ENCODE measurements at regions of chr3 and their contacts with region 1.

Region 1: DNA sequence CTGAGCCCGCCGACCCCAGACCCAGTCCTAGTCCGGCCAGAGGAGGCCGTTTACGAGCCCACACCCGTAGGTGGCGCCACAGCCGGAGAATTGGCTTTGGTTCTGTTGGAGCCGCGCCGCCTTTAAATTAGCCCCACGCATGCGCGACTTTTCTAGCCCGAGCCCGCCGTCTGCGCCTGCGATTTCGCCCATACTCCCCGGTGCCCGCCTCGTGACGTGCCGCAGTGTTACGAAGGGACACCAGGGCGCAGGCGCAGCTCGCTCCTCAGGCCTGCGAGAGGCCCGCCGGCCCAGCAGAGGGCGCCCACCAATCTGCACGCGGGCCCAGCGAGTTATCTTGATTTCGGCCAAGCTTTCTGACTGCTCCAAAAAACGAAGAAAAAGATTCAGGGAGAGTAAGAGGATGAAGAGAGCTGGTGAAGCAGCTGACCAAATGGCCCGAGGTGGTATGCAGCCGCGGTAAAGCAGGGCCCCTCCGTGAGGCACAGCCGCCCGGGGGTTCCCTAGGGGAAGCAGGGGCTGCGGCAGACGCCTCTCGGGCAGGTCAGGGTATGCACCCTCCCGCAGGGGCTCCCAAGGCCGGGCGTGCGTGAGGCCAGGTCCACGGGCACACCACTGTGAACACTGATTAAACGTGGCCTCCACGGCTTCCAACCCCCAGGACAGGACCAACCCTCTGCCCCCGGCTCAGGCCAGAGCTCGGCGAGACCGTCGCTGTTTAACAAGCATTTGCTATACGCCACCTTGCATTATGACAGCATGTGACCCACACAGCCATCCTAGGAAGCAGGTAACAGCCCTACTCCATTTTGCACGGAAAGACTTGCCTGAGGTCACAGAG is 32.8 kb downstream of the RPN1 start:
- DNase-seq: peak; percentile 94 to 99 (median 98)

Region 2: GRCh38 chr3:127775398-127776109 is 842.2 kb before region 1 on chr3:
- intact Hi-C with region 1: no loop called
- DNase-seq: peak in 2 of 10 donors; percentile 73 to 78

Region 3: DNA sequence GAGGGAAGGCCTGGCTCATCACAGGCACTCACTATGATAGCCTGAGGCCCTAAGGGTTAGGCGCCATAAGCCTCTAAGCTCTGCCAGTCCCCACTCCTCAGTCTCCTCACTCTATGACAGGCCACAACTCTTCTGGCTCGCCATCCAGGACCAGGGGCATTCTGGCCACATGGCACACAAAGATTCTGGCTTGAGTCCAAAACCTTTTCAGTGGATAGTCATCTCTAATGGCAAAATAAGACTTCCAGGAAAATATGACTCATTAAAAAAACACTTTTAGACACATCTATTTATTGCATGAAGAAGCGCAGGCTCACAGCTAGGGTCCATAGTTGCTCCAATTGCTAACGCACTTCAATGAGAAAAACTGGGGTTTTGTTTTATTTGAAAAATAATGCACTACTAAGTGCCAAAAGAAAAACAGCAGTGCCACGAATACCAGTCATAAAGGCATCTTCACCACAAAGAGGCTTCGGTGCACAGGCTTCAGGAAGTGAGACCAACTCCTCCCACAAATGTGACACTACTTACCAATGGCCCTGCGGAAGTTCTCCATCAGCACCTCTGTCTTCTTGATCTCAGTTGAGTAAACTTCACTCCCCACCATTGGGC is 505.3 kb before region 1 on chr3:
- intact Hi-C with region 1: no loop called
- DNase-seq: no peak

Region 4: DNA sequence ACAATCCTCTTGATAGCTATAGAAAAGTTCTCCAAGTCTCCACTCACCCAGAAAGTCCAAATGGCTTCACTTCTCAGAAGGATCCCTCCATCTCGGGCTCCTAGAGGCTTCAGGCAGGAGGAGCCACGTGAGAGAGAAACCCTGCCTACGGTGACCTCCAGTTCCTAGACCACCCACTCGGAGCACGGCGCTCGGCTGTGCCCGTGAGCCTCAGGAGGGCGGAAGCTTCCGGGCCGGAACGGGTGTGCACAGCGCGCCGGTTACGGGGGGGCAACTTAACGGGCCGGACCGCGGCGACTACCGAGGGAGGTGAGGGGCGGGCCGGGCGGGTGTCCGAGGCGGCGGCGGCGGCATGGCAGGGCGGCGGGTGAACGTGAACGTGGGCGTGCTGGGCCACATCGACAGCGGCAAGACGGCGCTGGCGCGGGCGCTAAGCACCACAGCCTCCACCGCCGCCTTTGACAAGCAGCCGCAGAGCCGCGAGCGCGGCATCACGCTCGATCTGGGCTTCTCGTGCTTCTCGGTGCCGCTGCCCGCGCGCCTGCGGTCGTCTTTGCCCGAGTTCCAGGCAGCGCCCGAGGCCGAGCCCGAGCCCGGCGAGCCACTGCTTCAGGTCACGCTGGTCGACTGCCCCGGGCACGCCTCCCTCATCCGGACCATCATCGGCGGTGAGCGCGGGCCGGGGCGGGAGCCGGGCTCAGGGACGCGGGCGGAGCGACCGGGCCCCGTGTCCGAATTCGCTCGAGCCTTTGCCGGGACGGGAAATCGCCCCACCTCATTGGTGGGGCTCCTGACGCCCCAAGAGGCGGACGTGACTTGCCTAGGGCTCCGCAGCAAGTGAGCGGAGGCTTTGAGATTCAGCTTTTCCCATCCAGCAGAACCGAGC is 464.4 kb before region 1 on chr3 and contains the start of gene EEFSEC:
- intact Hi-C with region 1: no loop called
- DNase-seq: peak; percentile 64 to 97 (median 82)

Region 5: DNA sequence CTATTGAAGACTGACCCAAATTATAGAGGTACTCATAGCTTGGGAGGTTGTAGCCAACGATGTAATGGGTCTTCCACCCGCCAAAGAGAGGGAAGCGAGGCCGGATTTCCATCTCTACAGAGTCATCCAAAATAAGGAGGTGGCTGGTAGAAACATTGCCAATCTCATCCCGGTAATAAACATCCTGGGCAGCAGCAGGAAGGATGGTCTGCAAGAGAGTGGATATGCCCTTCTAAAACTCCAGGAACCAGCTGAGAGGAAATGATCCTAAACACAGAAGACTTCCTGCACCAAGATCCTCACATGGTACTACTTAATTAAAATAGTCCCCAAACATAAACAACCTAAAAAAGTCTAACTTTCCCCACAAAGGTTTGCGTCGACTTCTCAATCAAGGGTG is 12.2 kb after region 1 on chr3:
- intact Hi-C with region 1: no loop called
- DNase-seq: no peak

Region 6: DNA sequence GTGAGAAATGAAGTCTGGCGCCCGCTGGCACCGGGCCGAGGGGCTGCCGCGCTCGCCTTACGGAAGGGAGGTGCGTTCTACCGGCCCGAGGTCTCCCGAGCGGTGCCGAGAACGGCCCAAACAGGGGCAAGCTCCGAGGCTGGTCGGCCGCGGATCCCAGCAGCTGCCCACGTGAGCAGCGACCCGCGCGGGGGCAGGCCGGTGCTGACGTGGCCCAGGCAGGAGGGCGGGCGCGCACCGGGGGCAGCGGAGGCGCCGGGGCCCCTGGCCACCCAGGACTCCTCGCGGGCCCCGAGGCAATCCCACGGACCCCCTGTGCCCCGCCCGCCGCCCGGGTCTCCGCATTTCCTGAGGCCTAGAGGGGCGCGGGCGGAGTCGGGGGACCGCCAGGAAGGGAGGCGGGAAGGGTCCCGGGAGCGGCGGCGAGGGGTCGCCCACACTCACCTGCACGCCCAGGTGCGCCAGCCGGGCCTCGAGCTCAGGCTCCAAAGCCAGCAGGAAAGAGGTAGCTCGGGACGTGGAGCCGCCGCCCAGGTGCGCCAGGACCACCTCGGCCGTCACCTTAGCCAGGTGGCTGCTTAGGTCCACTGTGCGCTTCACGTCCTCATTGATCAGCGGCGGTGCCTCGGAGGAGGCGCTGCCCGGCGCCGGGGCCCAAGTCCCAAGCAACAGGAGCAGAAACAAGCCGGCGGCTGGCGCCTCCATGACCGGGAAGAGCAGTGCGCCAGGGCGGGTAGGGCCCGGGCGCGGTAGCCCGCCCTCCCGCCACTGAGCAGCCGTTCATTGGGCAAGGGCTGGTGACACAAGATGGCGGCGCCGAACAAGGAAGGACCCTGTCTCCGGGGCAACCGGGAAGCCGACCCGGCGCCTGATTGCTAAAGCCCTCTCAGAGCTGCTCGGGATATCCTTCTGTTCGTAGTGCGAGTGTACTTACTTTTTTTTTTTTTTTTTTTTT is 32.6 kb after region 1 on chr3 and contains the start of gene RPN1:
- intact Hi-C with region 1: loop called (anchors 1 kb)
- DNase-seq: peak; percentile 91 to 99 (median 95)

Region 7: GRCh38 chr3:128725932-128726690 is 108.3 kb after region 1 on chr3 and contains the start of gene RAB7A:
- intact Hi-C with region 1: loop called (anchors 1 kb)
- DNase-seq: peak; percentile 96 to 99 (median 98)

Region 8: GRCh38 chr3:128879125-128879969 is 261.6 kb after region 1 on chr3 and contains the start of gene ACAD9:
- intact Hi-C with region 1: loop called (anchors 10 kb)
- DNase-seq: peak; percentile 95 to 100 (median 98)